Panc1 (cell line): ENCODE measurements at regions of chr2 and their contacts with region 1.

Region 1: DNA sequence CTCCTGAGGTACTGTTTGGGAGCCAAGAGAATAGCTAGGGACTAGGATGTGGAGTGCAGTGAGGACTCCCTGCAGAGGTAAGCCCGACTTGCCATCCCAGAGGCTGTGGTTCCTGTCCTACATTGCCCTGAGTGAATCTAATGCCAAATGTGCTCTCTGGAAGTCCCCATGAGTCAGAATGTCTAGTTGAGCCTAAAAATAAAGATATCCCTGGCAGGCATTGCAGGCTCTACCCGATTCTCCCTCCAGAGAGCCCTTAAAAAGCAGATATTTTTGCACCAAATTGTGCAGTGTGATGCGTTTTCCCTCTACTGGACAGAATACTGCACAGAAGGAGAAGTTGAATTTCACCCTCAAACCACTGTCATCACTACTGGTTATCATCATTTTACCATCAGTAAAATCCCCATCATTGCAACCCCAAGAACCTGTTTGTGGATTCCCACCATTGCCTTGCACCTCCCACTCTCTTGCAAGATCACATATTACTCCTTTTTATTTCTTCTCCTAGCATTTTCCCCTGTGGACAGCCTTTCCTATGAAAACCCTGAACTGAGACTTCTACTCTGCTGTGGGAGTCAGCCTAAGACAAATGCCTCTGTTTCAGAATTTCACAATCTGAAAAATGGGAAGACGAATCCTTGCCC is 98.0 kb downstream of the MARCHF4 start:
- DNase-seq: no peak
- ATAC-seq: peak; percentile 48; the same call in 1 of the 2 replicates
- H3K4me3 ChIP-seq: no peak overlapping the region
- H3K27ac ChIP-seq: no peak overlapping the region
- H3K4me1 ChIP-seq: no peaks in the 10 kb centered on the region
- H3K27me3 ChIP-seq: no peaks in the 10 kb centered on the region; the same call in 1 of the 2 replicates
- CTCF ChIP-seq: no peak

Region 2: DNA sequence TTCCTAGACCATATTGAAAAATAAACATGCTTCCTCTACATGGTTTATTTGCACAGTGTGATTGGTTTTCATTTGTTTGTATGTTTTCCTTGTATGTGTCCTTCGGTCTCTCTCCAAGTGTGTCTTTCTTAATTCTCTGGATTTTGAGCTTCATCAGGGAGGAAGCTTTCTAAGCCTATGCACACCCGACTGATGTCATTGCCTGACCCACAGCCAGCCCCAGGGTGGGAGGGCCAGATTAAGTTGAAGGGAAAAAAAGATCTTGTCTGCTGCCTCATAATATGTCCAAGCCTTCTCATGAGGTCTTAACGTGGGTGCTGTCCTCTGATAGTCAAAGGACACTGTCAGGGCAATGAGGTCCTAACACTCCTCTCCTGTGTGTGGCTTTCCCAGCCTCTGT is 17.2 kb before region 1 on chr2:
- CTCF ChIA-PET with region 1: no interaction called
- POLR2A ChIA-PET with region 1: interaction called, 12 read pairs
- in situ Hi-C with region 1: no loop called
- intact Hi-C with region 1: no loop called
- DNase-seq: no peak
- ATAC-seq: peak; percentile 43; the same call in 1 of the 2 replicates
- H3K4me3 ChIP-seq: no peak overlapping the region
- H3K27ac ChIP-seq: no peak overlapping the region
- H3K4me1 ChIP-seq: no peaks in the 10 kb centered on the region
- H3K27me3 ChIP-seq: no peaks in the 10 kb centered on the region
- CTCF ChIP-seq: no peak